Naive thymus-derived CD4-positive, alpha-beta T cell (primary cell): ENCODE measurements at regions of chr3 and their contacts with region 1.

Region 1: GRCh38 chr3:87350364-87351199 is 74.2 kb upstream of the POU1F1 start:
- DNase-seq: peak in 7 of 9 donors; percentile 11 to 66 (median 47)
- ATAC-seq: peak; percentile 94
- H3K4me3 ChIP-seq: no peak overlapping the region
- H3K4me3 Mint-ChIP-seq: no peak overlapping the region
- H3K27ac ChIP-seq: no peak overlapping the region
- H3K27ac Mint-ChIP-seq: no peak overlapping the region
- H3K4me1 ChIP-seq: no peaks in the 10 kb centered on the region
- H3K4me1 Mint-ChIP-seq: no peaks in the 10 kb centered on the region
- H3K27me3 ChIP-seq: no peaks in the 10 kb centered on the region
- H3K27me3 Mint-ChIP-seq: peaks cover 0 to 8% (median 4%) of the 10 kb centered on the region in 5 donors

Region 2: GRCh38 chr3:87503900-87504508 is 153.4 kb after region 1 on chr3:
- CTCF ChIA-PET with region 1: no interaction called
- POLR2A ChIA-PET with region 1: no interaction called
- intact Hi-C with region 1: loop called in 1 of 2 experiments (anchors 5 kb)
- DNase-seq: peak in 1 of 9 donors; percentile 11
- ATAC-seq: peak; percentile 57
- H3K4me3 ChIP-seq: no peak overlapping the region
- H3K4me3 Mint-ChIP-seq: no peak overlapping the region
- H3K27ac ChIP-seq: no peak overlapping the region
- H3K27ac Mint-ChIP-seq: no peak overlapping the region
- H3K4me1 ChIP-seq: no peaks in the 10 kb centered on the region
- H3K4me1 Mint-ChIP-seq: no peaks in the 10 kb centered on the region
- H3K27me3 ChIP-seq: no peaks in the 10 kb centered on the region
- H3K27me3 Mint-ChIP-seq: no peaks in the 10 kb centered on the region